Ascending aorta (tissue), 2 donors: ENCODE measurements at regions of chr6 and their contacts with region 1.

Region 1: DNA sequence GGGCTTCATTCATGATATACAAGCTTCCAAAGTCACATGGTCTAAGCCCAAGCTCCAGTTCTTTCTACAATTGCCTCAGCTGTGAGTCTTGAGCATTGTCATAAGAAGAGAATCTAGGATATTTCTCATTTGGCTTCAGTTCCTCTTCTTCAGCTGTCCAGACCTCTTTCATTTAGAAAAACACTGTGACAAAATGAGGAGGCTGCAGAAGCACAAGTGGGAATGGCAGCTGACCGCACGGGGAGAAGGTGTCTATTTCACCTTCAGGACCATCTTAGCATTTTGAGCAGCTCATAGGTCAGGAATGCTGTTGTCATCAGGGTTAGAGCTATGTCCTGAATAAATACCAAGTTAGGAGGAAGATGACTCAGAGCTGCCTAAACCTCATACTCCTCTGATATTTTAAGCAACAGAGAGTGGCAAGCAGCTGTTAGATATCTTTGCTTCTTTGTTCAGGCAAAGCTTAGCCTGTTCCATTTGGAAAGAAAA is 390.1 kb upstream of the CITED2 start:
- DNase-seq: peak in 1 of 2 donors; percentile 71
- H3K4me3 ChIP-seq: peak overlapping the region in 1 of 2 donors; percentile 7
- H3K27ac ChIP-seq: peak overlapping the region; percentile 80 to 83
- H3K4me1 ChIP-seq: peaks cover 3 to 24% of the 10 kb centered on the region in 2 donors
- H3K27me3 ChIP-seq: no peaks in the 10 kb centered on the region
- CTCF ChIP-seq: no peak

Region 2: DNA sequence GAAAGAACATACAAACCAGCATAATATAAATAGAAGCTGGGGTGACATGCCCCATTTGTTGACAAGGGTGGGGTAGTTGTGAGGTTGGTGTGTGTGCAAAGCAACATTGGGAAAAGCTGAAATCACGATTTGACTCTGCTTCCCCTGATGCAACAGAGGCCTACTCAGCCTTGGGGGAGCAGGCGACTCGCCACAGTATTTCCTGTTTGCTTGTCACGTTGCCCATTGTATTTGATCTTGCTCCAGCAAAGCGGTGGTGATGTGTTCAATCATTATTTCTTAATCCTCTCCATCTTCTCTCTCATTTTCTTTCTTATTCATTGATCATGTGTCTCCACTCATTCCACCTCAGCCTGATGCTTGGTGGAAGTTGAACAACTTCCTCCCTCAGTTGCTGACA is 224.3 kb before region 1 on chr6:
- intact Hi-C with region 1: loop called (anchors 10 kb)
- DNase-seq: peak in 1 of 2 donors; percentile 69
- H3K4me3 ChIP-seq: no peak overlapping the region
- H3K27ac ChIP-seq: peak overlapping the region; percentile 68 to 69
- H3K4me1 ChIP-seq: peaks cover 0 to 14% of the 10 kb centered on the region in 2 donors
- H3K27me3 ChIP-seq: no peaks in the 10 kb centered on the region
- CTCF ChIP-seq: no peak

Region 3: GRCh38 chr6:139550361-139550760 is 214.2 kb before region 1 on chr6:
- intact Hi-C with region 1: no loop called
- DNase-seq: no peak
- H3K4me3 ChIP-seq: no peak overlapping the region
- H3K27ac ChIP-seq: no peak overlapping the region
- H3K4me1 ChIP-seq: peaks cover 0 to 15% of the 10 kb centered on the region in 2 donors
- H3K27me3 ChIP-seq: no peaks in the 10 kb centered on the region
- CTCF ChIP-seq: no peak

Region 4: GRCh38 chr6:139605350-139605749 is 159.2 kb before region 1 on chr6:
- intact Hi-C with region 1: loop called (anchors 5 kb)
- DNase-seq: peak in 1 of 2 donors; percentile 71
- H3K4me3 ChIP-seq: no peak overlapping the region
- H3K27ac ChIP-seq: no peak overlapping the region
- H3K4me1 ChIP-seq: peaks cover 0 to 4% of the 10 kb centered on the region in 2 donors
- H3K27me3 ChIP-seq: no peaks in the 10 kb centered on the region
- CTCF ChIP-seq: no peak